Activated naive CD4-positive, alpha-beta T cell treated with anti-CD3 and anti-CD28 coated beads for 36 hours (primary cell): ENCODE measurements at regions of chr3 and their contacts with region 1.

Region 1: GRCh38 chr3:18790384-18790783 is 357.9 kb upstream of the KCNH8 start:
- DNase-seq: no peak
- H3K4me3 Mint-ChIP-seq: no peak overlapping the region
- H3K27ac Mint-ChIP-seq: no peak overlapping the region
- H3K4me1 Mint-ChIP-seq: peaks cover 11% of the 10 kb centered on the region
- H3K27me3 Mint-ChIP-seq: no peaks in the 10 kb centered on the region

Region 2: GRCh38 chr3:18454766-18455165 is 335.6 kb before region 1 on chr3:
- CTCF ChIA-PET with region 1: no interaction called
- intact Hi-C with region 1: no loop called
- DNase-seq: no peak
- H3K4me3 Mint-ChIP-seq: no peak overlapping the region
- H3K27ac Mint-ChIP-seq: no peak overlapping the region
- H3K4me1 Mint-ChIP-seq: peaks cover 51% of the 10 kb centered on the region
- H3K27me3 Mint-ChIP-seq: no peaks in the 10 kb centered on the region

Region 3: DNA sequence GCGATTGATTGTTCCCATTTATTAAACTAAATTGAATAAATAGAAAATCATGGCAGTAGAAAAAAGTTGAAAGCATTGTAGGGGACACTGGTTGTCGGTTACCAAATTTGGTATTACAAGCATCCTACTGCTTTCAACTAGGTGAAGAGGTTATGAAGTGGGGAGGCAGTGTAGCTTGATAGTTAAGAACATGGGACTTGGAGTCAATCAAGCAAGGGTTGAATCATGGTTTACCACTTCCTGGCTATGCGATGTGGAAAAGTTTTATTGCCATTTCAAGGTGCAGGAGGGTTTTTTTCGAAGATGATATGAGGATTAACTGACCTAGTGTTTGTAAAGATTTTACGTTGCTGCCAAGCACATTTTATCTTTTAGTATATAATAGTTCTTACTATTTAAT is 39.7 kb after region 1 on chr3:
- CTCF ChIA-PET with region 1: no interaction called
- intact Hi-C with region 1: loop called (anchors 2 kb)
- DNase-seq: peak; percentile 60
- H3K4me3 Mint-ChIP-seq: no peak overlapping the region
- H3K27ac Mint-ChIP-seq: peak overlapping the region; percentile 31
- H3K4me1 Mint-ChIP-seq: peaks cover 25% of the 10 kb centered on the region
- H3K27me3 Mint-ChIP-seq: no peaks in the 10 kb centered on the region